SK-N-SH (cell line): ENCODE measurements at regions of chr16 and their contacts with region 1.

Region 1: GRCh38 chr16:69930117-69930776 is 20.9 kb upstream of the CLEC18A start:
- DNase-seq: peak; percentile 85
- H3K4me3 ChIP-seq: no peak overlapping the region
- H3K27ac ChIP-seq: no peak overlapping the region
- H3K4me1 ChIP-seq: no peaks in the 10 kb centered on the region; a peak in 1 of 4 replicates
- H3K27me3 ChIP-seq: no peaks in the 10 kb centered on the region
- CTCF ChIP-seq: peak; percentile 87
- EP300 ChIP-seq: no peak
- RAD21 ChIP-seq: peak; percentile 75

Region 2: GRCh38 chr16:69787883-69788282 is 142.4 kb before region 1 on chr16:
- CTCF ChIA-PET with region 1: interaction called, 117 read pairs
- POLR2A ChIA-PET with region 1: no interaction called
- DNase-seq: no peak
- H3K4me3 ChIP-seq: no peak overlapping the region
- H3K27ac ChIP-seq: no peak overlapping the region
- H3K4me1 ChIP-seq: no peaks in the 10 kb centered on the region
- H3K27me3 ChIP-seq: no peaks in the 10 kb centered on the region
- CTCF ChIP-seq: no peak
- EP300 ChIP-seq: no peak
- RAD21 ChIP-seq: no peak

Region 3: GRCh38 chr16:69812688-69813014 is 117.6 kb before region 1 on chr16:
- CTCF ChIA-PET with region 1: interaction called, 21 read pairs
- POLR2A ChIA-PET with region 1: no interaction called
- DNase-seq: no peak
- H3K4me3 ChIP-seq: no peak overlapping the region
- H3K27ac ChIP-seq: no peak overlapping the region
- H3K4me1 ChIP-seq: no peaks in the 10 kb centered on the region
- H3K27me3 ChIP-seq: no peaks in the 10 kb centered on the region
- CTCF ChIP-seq: no peak
- EP300 ChIP-seq: no peak
- RAD21 ChIP-seq: no peak

Region 4: DNA sequence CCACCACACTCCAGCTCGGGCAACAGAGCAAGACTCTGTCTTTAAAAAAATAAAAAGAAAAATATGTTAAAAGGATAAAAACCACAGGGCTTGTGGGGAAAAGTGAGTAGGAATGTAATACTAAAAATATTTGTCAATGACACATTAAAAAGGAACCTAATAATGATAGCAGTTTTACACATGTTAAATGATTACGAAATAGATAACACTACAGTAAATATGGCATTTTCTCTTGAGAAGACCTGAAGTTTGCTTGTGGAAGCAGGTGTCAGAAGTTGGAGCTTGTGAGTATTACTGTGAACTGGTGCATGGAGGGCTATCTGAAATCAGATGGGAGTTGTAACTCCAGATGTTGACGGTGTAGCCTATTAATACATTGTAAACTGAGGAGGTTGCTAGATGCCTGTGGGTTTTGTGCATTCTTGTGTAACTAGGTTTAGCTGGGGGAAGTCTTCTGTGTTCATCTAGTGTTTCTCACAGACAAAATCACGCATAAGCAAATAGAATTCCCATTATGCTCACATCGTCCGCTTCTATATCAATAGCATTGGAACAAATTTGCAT is 23.3 kb before region 1 on chr16:
- CTCF ChIA-PET with region 1: interaction called, 10 read pairs
- POLR2A ChIA-PET with region 1: no interaction called
- DNase-seq: no peak
- H3K4me3 ChIP-seq: no peak overlapping the region
- H3K27ac ChIP-seq: no peak overlapping the region
- H3K4me1 ChIP-seq: no peaks in the 10 kb centered on the region
- H3K27me3 ChIP-seq: no peaks in the 10 kb centered on the region
- CTCF ChIP-seq: no peak
- EP300 ChIP-seq: no peak
- RAD21 ChIP-seq: no peak

Region 5: DNA sequence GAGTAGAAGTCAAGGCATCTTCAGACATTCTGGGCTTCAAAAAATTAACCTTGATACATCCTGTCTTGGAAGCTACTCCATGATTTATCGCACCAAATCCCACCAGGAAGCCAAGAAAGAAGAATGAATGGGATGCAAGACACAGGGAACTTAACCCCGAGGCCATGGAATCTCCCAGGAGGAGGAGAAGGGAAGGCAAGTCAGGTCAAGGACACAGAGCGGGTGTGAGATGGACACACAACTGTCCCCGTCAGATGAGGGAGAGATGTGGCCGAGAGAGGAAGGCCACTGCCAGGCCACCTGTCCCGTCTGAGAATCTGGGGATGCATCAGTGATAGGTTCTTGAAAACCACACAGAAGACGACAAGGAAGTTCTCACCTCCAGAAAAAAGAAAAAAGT is 15.4 kb before region 1 on chr16:
- CTCF ChIA-PET with region 1: interaction called, 14 read pairs
- POLR2A ChIA-PET with region 1: no interaction called
- DNase-seq: no peak
- H3K4me3 ChIP-seq: no peak overlapping the region
- H3K27ac ChIP-seq: no peak overlapping the region
- H3K4me1 ChIP-seq: peaks cover 0 to 6% of the 10 kb centered on the region in 2 experiments; a peak in 2 of 4 replicates
- H3K27me3 ChIP-seq: no peaks in the 10 kb centered on the region
- CTCF ChIP-seq: no peak
- EP300 ChIP-seq: no peak
- RAD21 ChIP-seq: no peak